ENCODE measurements at regions of chr15 and their contacts with region 1.

Region 1: DNA sequence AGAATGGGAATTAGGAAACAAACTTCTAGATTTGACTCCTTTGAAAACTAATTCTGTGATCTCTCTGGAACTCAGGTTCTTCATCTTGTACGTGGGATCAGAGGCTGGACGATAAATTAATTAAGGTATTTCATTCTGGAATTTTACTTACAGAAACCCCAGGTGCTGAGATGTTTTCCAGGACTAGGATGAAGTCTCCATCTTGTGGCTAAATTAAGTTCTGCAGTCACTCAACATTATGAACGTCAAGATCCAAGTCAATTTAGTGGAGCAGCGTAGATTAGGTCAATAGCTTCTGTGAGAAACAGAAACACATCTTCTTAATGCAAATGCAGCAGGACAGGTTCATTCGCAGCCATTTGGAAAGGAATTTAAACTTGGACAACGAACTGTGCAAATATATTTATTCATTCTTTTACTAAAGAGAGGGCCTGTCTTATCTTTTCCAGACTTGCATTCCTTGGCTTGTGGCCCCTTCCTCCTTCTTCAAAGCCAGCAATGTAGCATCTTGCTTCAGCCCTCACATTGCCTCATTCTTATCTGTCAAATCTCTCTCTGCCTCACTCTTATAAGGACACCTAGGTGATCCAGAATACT is 26.7 kb upstream of the TMC3 start:
- DNase-seq: peak; percentile 71
- H3K4me3 ChIP-seq: no peak overlapping the region
- H3K27ac ChIP-seq: no peak overlapping the region
- H3K4me1 ChIP-seq: no peaks in the 10 kb centered on the region
- H3K27me3 ChIP-seq: peaks cover 3% of the 10 kb centered on the region in 2 experiments
- CTCF ChIP-seq: peak; percentile 49 to 54
- POLR2A ChIP-seq: no peak

Region 2: DNA sequence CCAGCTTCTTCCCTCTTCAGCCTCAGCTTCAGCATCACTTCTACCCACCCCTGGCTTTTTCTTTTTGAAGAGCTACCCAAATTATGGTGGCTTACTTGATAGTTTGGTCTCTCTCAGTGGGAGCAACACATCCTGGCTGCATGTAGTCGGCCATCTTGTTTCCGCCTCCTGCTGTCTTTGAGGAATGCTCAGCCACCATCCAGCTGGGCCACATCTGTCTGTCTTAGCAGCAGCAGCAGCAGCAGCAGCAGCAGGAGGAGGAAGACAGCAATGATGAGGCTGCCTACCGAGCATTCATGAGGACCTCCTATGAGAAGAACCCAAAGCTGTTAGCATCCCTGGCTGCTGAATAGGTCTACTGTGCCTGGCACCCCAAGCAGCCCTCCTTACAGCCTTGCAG is 184.3 kb before region 1 on chr15:
- CTCF ChIA-PET with region 1: no interaction called
- POLR2A ChIA-PET with region 1: no interaction called
- dilution Hi-C with region 1: no loop called
- intact Hi-C with region 1: no loop called
- DNase-seq: no peak
- H3K4me3 ChIP-seq: no peak overlapping the region
- H3K27ac ChIP-seq: no peak overlapping the region
- H3K4me1 ChIP-seq: no peaks in the 10 kb centered on the region
- H3K27me3 ChIP-seq: no peaks in the 10 kb centered on the region
- CTCF ChIP-seq: no peak
- POLR2A ChIP-seq: no peak

Region 3: GRCh38 chr15:81284256-81285031 is 116.3 kb before region 1 on chr15:
- CTCF ChIA-PET with region 1: interaction called, 14 read pairs
- POLR2A ChIA-PET with region 1: no interaction called
- dilution Hi-C with region 1: no loop called
- intact Hi-C with region 1: no loop called
- DNase-seq: no peak
- H3K4me3 ChIP-seq: no peak overlapping the region
- H3K27ac ChIP-seq: no peak overlapping the region
- H3K4me1 ChIP-seq: no peaks in the 10 kb centered on the region
- H3K27me3 ChIP-seq: peaks cover 0 to 2% of the 10 kb centered on the region in 2 experiments
- CTCF ChIP-seq: no peak
- POLR2A ChIP-seq: no peak

Region 4: DNA sequence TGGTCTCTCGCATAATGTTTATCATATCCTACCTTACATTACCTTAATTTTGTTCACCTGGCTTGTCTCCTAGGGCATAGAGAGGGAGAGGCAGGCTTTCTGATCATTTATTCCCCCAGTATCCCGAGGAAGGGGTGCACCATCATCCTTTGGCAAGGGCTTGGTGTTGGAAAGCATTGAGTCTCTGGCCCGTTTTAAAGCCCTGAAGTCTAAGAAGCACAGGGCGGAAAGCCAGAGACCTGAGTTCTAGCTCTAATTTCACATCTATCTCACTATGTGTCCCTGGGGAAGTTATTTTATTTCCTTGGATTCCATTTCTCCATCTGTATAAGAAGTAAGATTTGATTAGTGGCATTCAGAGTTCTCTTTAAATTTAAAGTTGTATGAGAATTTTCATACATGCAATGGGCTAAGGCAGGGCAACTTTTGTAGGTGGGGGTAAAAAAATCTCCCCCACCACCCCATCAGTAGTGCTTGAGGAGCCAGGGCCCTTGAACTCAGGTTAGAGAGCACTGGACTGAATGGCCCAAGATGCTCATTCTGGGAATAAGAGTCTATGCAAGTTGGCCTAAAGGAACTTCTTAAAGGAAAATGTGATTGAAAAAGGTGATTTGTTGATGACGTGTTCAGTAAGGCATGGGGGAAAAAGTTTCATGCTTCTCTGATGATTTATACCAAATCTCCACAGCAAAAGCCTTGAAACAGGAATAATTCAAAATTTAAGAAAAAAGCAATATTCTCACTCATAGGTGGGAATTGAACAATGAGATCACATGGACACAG is 36.8 kb before region 1 on chr15:
- CTCF ChIA-PET with region 1: no interaction called
- POLR2A ChIA-PET with region 1: no interaction called
- dilution Hi-C with region 1: no loop called
- intact Hi-C with region 1: no loop called
- DNase-seq: no peak
- H3K4me3 ChIP-seq: no peak overlapping the region
- H3K27ac ChIP-seq: no peak overlapping the region
- H3K4me1 ChIP-seq: no peaks in the 10 kb centered on the region
- H3K27me3 ChIP-seq: peaks cover 0 to 2% of the 10 kb centered on the region in 2 experiments
- CTCF ChIP-seq: no peak
- POLR2A ChIP-seq: no peak

Region 5: DNA sequence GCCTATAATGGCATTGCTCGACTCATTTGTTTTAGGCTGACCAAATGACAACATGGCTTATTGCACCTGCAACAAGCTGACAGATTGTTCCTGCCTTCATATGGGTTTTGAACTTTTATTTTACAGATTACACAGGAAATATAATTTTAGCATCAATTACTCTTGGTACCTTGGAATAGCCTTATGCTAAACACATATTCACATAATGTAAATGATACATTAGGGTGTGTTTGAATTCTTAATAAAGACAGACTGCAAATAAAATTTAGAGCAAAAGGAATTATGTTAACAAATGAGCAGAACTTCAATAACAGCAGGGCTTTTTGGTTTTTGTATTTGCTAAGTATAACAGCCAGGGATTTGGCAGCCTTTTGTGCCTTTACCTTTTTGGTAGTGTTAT is 25.2 kb after region 1 on chr15:
- CTCF ChIA-PET with region 1: no interaction called
- POLR2A ChIA-PET with region 1: no interaction called
- dilution Hi-C with region 1: no loop called
- intact Hi-C with region 1: no loop called
- DNase-seq: no peak
- H3K4me3 ChIP-seq: no peak overlapping the region
- H3K27ac ChIP-seq: no peak overlapping the region
- H3K4me1 ChIP-seq: no peaks in the 10 kb centered on the region
- H3K27me3 ChIP-seq: peaks cover 0 to 1% of the 10 kb centered on the region in 2 experiments
- CTCF ChIP-seq: no peak
- POLR2A ChIP-seq: no peak

Measured in endothelial cell of umbilical vein (primary cell).